ENCODE measurements at regions of chr12 and their contacts with region 1.

Region 1: DNA sequence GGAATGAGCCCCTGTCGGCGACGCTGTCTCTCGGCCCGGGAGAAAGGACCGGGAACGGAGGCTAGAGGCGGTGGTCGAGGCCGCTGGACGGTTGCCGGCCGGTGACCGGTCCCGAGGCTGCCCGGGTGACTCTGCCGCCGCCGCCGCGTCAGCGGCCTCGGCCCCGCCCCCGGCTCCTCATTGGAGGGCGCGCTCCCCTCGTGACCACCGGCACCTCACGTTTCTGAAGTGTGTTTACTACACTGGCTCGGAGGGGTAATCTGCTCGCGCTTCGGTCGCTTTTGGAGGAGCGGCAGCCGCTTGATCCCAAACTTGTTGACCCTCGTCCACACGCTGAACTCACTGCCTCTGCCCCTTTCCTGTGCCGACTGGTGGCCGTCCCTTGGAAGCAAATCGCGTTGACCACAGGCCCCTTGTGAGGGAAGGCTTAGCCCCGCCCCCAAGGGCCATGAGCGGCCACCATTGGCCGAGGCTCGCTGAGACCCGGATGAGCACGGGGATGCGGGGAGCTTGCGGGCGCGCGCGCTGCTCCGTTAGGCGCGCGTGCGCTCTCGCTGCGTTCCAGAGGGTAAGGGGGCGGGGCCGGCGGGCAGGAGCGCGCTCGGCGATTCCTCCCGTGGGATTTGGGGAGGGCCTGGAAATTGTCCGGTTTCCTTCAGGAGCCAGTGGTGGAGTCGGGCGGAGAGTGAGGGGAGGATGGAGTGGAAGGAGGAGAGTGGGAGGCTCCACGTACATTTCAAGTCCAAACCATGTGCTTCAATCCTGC is at the start of gene CRY1:
- DNase-seq: peak; percentile 98
- ATAC-seq: peak; percentile 95 to 96
- total RNA-seq, gene CRY1: 9.5 to 17.2 TPM

Region 2: DNA sequence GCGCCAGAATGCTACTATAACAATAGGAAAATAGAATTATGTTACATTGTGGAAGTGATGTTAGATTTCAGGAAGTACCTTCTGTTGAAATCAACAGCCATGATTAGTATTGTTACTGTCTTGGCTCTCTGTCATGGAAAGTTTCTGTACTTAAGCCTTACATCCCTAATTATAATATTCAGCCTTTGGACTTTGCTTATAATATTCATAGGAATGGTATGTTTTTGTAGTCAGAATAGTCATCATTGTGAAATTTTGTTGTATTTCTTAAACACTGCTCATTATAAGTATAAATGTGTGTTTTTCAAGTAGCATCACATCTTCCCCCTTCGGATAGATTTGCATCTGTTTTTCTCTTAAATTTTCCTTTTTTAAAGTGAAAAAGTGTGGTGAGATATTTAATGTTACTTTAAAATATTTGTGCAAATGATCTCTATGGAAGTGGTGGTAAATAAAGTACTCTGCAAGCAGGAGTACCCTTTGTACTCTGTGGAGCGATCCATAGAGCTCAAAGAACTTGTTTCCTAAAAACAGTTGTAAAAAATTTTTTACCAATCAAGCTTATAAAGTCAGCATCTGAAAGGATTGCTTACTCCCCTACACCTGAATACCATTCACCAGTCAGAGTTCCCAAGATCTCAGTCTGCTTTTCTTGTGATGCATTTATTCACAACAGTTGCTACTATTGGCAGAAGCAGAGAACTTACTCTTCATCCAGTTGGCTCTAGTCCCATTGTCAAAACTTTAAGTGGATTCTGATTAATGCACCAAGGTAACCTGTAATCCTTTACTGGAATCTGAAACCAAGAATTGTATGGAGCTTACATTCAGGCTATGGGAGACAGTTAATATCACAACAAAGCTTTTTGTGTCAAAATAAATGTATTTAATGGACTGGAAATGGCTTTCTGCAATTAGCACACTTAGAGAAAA is 231.3 kb before region 1 on chr12:
- intact Hi-C with region 1: no loop called
- DNase-seq: no peak
- ATAC-seq: peak in 1 of 2 donors; percentile 44

Region 3: GRCh38 chr12:106955377-106956047 is 138.1 kb before region 1 on chr12 and contains the start of gene TMEM263:
- intact Hi-C with region 1: loop called in 1 of 2 experiments (anchors 5 kb)
- DNase-seq: peak; percentile 95
- ATAC-seq: peak; percentile 93 to 95
- total RNA-seq, gene TMEM263: 38.3 to 49.7 TPM

Region 4: DNA sequence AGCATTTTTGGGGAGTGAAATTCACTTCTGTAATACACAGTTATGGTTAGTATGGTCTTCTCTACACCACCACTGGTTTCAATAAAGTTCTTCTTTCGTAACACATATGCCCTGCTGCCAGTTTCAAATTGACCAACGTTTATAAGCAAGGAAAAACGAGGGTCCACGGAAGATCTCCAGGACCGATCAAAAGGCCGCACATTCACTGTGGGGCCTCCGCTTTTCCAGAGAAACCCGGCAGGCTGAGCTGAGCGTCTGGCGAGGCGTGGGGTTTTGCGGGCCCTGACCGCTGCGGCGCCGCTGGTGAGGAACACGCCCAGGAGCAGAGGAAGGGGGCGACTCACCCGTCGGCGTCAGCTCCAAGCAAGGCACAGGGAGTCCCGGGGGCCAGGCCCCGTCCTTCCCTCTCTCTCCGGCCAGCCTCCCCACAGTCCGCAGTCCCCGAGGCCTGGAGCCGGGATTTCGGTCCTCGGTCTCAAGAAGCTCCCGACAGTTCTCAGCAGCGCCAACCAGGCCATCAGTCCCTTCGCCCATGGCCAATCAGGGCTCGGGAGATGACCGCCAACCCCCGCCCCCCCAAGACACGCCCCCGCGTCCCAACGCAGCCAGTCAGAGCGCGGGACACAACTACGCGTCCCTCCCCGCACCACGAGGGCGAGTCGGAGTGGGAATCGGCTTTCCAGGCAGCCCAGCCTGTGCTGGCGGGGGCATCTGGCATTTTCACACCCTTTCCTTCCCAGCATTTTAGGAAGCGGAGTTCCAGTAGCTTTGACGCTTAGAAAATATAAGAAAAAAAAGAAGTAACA is 106.8 kb before region 1 on chr12 and contains the start of gene MTERF2:
- intact Hi-C with region 1: loop called in 1 of 2 experiments (anchors 5 kb)
- DNase-seq: peak; percentile 95
- ATAC-seq: peak; percentile 99
- total RNA-seq, gene MTERF2: 21.2 to 25.2 TPM

Region 5: DNA sequence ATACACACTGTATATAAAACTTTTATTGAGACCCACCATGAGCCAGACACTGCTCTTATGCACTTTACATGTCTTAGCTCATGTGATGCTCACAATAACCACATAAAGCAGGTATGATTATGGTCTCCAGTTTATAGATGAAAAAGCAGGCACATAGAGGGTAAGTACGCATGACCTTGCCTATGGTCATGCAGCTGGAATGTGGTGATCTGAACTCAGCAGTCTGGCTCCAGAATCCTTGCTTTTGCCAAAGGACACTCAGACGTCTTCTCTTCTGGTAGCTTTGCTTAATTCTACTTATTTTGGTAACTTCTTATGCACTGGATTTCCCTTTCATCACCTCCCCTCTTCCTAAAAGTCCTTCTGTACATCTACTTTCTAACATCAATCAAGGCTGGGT is 103.1 kb after region 1 on chr12:
- intact Hi-C with region 1: no loop called
- DNase-seq: no peak
- ATAC-seq: no peak